ENCODE measurements at regions of chr11 and their contacts with region 1.

Region 1: DNA sequence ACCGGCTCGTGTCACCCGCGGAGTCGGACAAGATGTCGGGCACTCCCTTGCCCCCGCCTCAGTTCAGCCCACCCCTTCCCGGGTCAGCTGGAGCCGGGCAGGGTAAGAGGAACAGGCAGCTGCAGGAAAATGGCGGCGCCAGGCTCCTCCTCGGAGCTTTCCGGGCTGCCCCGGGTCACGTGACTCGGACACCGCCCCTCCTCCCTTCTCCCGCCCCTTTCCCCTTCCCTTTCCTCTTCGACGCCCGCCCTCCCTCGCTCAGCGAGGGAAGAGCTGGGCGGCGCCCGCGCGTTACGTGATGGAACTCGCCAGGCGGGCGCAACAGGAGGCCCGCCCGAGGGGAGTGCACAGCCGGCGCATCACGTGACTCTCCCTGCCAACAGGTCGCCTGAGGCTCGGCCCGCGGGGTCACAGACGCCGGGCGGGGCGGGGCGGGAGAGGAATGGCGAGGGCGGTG is at the start of gene PICALM:
- DNase-seq: peak; percentile 97
- ATAC-seq: peak; percentile 80
- H3K4me3 ChIP-seq: peak within 1 kb of the TSS; percentile 95
- H3K27ac ChIP-seq: peak within 1 kb of the TSS; percentile 99
- H3K4me1 ChIP-seq: peaks cover 10% of the 10 kb centered on the region
- H3K27me3 ChIP-seq: no peaks in the 10 kb centered on the region
- CTCF ChIP-seq: no peak
- EP300 ChIP-seq: peak in 1 of 2 experiments; percentile 14; a peak in 1 of 4 replicates
- POLR2A ChIP-seq: peak; percentile 81
- RAD21 ChIP-seq: no peak
- polyA plus RNA-seq, gene PICALM: 4.3 to 10.4 TPM

Region 2: GRCh38 chr11:86052693-86053641 is 16.0 kb before region 1 on chr11:
- CTCF ChIA-PET with region 1: interaction called, 33 read pairs
- POLR2A ChIA-PET with region 1: interaction called, 5 read pairs
- RAD21 ChIA-PET with region 1: interaction called, 6 read pairs
- SMC1A ChIA-PET with region 1: interaction called, 38 read pairs
- in situ Hi-C with region 1: no loop called
- intact Hi-C with region 1: no loop called
- DNase-seq: no peak
- ATAC-seq: no peak
- H3K4me3 ChIP-seq: no peak overlapping the region
- H3K27ac ChIP-seq: peak overlapping the region; percentile 26; the same call in 1 of the 2 replicates
- H3K4me1 ChIP-seq: peaks cover 11% of the 10 kb centered on the region
- H3K27me3 ChIP-seq: no peaks in the 10 kb centered on the region
- CTCF ChIP-seq: no peak
- EP300 ChIP-seq: no peak
- POLR2A ChIP-seq: no peak
- RAD21 ChIP-seq: no peak

Region 3: GRCh38 chr11:86124834-86125233 is 55.9 kb after region 1 on chr11:
- CTCF ChIA-PET with region 1: no interaction called
- POLR2A ChIA-PET with region 1: interaction called, 6 read pairs
- RAD21 ChIA-PET with region 1: interaction called, 6 read pairs
- SMC1A ChIA-PET with region 1: interaction called, 10 read pairs
- in situ Hi-C with region 1: no loop called
- intact Hi-C with region 1: no loop called
- DNase-seq: no peak
- ATAC-seq: peak; percentile 89
- H3K4me3 ChIP-seq: no peak overlapping the region
- H3K27ac ChIP-seq: no peak overlapping the region
- H3K4me1 ChIP-seq: peaks cover 11% of the 10 kb centered on the region
- H3K27me3 ChIP-seq: no peaks in the 10 kb centered on the region
- CTCF ChIP-seq: no peak
- EP300 ChIP-seq: no peak; a peak in 1 of 4 replicates
- POLR2A ChIP-seq: no peak
- RAD21 ChIP-seq: no peak

Region 4: DNA sequence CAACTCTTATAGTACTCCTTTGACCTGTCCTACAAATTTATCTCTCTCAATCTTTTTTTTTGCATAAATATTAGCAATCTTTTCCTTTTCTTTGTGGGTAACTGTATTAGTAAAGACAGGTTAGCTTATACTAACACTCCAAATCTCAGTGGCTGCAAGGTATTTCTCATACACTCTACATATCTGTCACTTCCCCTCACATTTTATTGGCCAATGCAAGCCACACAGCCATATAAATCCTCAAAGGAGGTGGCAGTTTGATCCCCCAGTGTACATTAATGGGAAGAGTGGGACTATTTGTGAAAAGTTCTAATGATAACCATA is 133.0 kb after region 1 on chr11:
- CTCF ChIA-PET with region 1: interaction called, 6 read pairs
- POLR2A ChIA-PET with region 1: interaction called, 8 read pairs
- RAD21 ChIA-PET with region 1: interaction called, 64 read pairs
- SMC1A ChIA-PET with region 1: interaction called, 13 read pairs
- in situ Hi-C with region 1: no loop called
- intact Hi-C with region 1: no loop called
- DNase-seq: no peak
- ATAC-seq: peak; percentile 85
- H3K4me3 ChIP-seq: peak overlapping the region; percentile 66
- H3K27ac ChIP-seq: peak overlapping the region; percentile 82
- H3K4me1 ChIP-seq: peaks cover 15% of the 10 kb centered on the region
- H3K27me3 ChIP-seq: no peaks in the 10 kb centered on the region
- CTCF ChIP-seq: no peak
- EP300 ChIP-seq: no peak
- POLR2A ChIP-seq: no peak
- RAD21 ChIP-seq: no peak

Region 5: GRCh38 chr11:86251345-86251744 is 182.4 kb after region 1 on chr11:
- CTCF ChIA-PET with region 1: interaction called, 5 read pairs
- POLR2A ChIA-PET with region 1: interaction called, 3 read pairs
- RAD21 ChIA-PET with region 1: interaction called, 10 read pairs
- SMC1A ChIA-PET with region 1: interaction called, 18 read pairs
- in situ Hi-C with region 1: no loop called
- intact Hi-C with region 1: no loop called
- DNase-seq: no peak
- ATAC-seq: peak; percentile 27
- H3K4me3 ChIP-seq: peak overlapping the region; percentile 15; the same call in 1 of the 2 replicates
- H3K27ac ChIP-seq: peak overlapping the region; percentile 58
- H3K4me1 ChIP-seq: peaks cover 26% of the 10 kb centered on the region
- H3K27me3 ChIP-seq: no peaks in the 10 kb centered on the region
- CTCF ChIP-seq: no peak
- EP300 ChIP-seq: no peak
- POLR2A ChIP-seq: no peak
- RAD21 ChIP-seq: no peak